Ascending aorta (tissue), 2 donors: ENCODE measurements at regions of chr10 and their contacts with region 1.

Region 1: GRCh38 chr10:22003079-22003913 is at the start of gene DNAJC1:
- DNase-seq: peak; percentile 93 to 99
- H3K4me3 ChIP-seq: peak within 1 kb of the TSS; percentile 74 to 81
- H3K27ac ChIP-seq: peak within 1 kb of the TSS; percentile 96
- H3K4me1 ChIP-seq: peaks cover 0 to 6% of the 10 kb centered on the region in 2 donors
- H3K27me3 ChIP-seq: no peaks in the 10 kb centered on the region
- CTCF ChIP-seq: peak in 2 of 3 experiments; percentile 13 to 15
- total RNA-seq, gene DNAJC1: 26.1 TPM

Region 2: DNA sequence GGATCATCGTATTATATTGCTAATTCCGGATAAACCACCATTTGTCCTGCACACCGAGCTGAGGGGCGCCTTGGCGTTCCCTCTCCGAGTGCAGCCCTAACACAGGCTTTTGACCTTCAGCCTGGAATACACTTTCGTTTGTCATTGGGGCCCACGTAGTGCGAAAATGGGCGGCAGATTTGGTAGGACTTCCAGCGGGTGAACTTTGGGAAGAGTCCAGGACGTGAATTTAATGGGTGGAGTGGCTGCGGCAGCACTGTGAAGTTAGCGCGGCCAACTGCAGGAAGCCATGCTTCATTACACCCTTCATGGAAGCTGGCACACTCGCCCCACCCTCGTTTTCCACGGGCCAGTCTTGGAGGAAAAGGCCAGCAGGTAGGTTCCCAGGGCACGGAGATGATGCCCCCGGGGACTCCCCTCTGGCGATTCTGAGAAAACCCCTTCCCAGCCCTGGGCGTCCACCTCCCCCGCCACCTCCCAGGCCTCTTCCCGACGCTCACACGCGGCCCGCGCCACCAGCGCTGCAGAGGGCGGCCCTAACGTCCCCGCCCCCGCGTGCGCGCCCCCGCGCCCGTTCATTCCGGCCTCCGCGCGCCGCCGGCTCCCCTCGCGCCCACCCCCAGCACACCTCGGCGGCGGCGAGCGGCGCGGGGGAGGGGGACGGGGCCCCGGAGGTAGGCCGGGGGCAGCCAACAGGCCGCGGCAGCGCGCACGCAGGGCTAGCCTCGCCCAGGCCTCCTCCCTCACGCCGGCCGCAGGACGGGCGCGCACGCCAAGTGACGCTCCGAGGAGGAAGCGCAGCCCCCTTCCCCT is 469.6 kb before region 1 on chr10 and contains the start of gene MLLT10:
- intact Hi-C with region 1: loop called (anchors 10 kb)
- DNase-seq: peak; percentile 82 to 96
- H3K4me3 ChIP-seq: peak within 1 kb of the TSS; percentile 81 to 93
- H3K27ac ChIP-seq: peak within 1 kb of the TSS; percentile 89 to 94
- H3K4me1 ChIP-seq: peaks cover 0 to 10% of the 10 kb centered on the region in 2 donors
- H3K27me3 ChIP-seq: no peaks in the 10 kb centered on the region
- CTCF ChIP-seq: peak; percentile 37 to 48 (median 42)
- total RNA-seq, gene MLLT10: 16.3 TPM

Region 3: GRCh38 chr10:21732067-21732772 is 271.1 kb before region 1 on chr10:
- intact Hi-C with region 1: no loop called
- DNase-seq: no peak
- H3K4me3 ChIP-seq: no peak overlapping the region
- H3K27ac ChIP-seq: no peak overlapping the region
- H3K4me1 ChIP-seq: no peaks in the 10 kb centered on the region
- H3K27me3 ChIP-seq: no peaks in the 10 kb centered on the region
- CTCF ChIP-seq: peak; percentile 62 to 79 (median 74)

Region 4: GRCh38 chr10:22251751-22252223 is 248.5 kb after region 1 on chr10:
- intact Hi-C with region 1: loop called (anchors 5 kb)
- DNase-seq: peak in 1 of 2 donors; percentile 81
- H3K4me3 ChIP-seq: peak overlapping the region; percentile 81 to 93
- H3K27ac ChIP-seq: peak overlapping the region; percentile 98
- H3K4me1 ChIP-seq: no peaks in the 10 kb centered on the region
- H3K27me3 ChIP-seq: no peaks in the 10 kb centered on the region
- CTCF ChIP-seq: no peak

Region 5: GRCh38 chr10:22436884-22437619 is 433.8 kb after region 1 on chr10:
- intact Hi-C with region 1: loop called (anchors 2 kb)
- DNase-seq: peak; percentile 43 to 94
- H3K4me3 ChIP-seq: peak overlapping the region; percentile 72 to 78
- H3K27ac ChIP-seq: peak overlapping the region; percentile 92 to 97
- H3K4me1 ChIP-seq: peaks cover 0 to 15% of the 10 kb centered on the region in 2 donors
- H3K27me3 ChIP-seq: no peaks in the 10 kb centered on the region
- CTCF ChIP-seq: peak in 1 of 3 experiments; percentile 19

Region 6: GRCh38 chr10:23067939-23068775 is 1064.9 kb after region 1 on chr10:
- intact Hi-C with region 1: loop called (anchors 2 kb)
- DNase-seq: peak in 1 of 2 donors; percentile 93
- H3K4me3 ChIP-seq: no peak overlapping the region
- H3K27ac ChIP-seq: peak overlapping the region; percentile 28 to 33
- H3K4me1 ChIP-seq: peaks cover 5 to 12% of the 10 kb centered on the region in 2 donors
- H3K27me3 ChIP-seq: no peaks in the 10 kb centered on the region
- CTCF ChIP-seq: peak; percentile 44 to 87 (median 86)